ENCODE measurements at regions of chr5 and their contacts with region 1.

Region 1: GRCh38 chr5:140408750-140409256 is 7.2 kb downstream of the ANKHD1 start:
- DNase-seq: no peak
- H3K4me3 ChIP-seq: no peak overlapping the region
- H3K4me3 Mint-ChIP-seq: no peak overlapping the region
- H3K27ac ChIP-seq: no peak overlapping the region
- H3K27ac Mint-ChIP-seq: peak overlapping the region in 2 of 7 donors; percentile 37 to 40
- H3K4me1 ChIP-seq: peaks cover 3 to 8% of the 10 kb centered on the region in 2 donors
- H3K4me1 Mint-ChIP-seq: peaks cover 19% of the 10 kb centered on the region
- H3K27me3 ChIP-seq: no peaks in the 10 kb centered on the region
- H3K27me3 Mint-ChIP-seq: no peaks in the 10 kb centered on the region
- CTCF ChIP-seq: no peak

Region 2: GRCh38 chr5:140381972-140382371 is 26.8 kb before region 1 on chr5:
- intact Hi-C with region 1: loop called in 1 of 2 experiments (anchors 1 kb)
- DNase-seq: no peak
- H3K4me3 ChIP-seq: no peak overlapping the region
- H3K4me3 Mint-ChIP-seq: no peak overlapping the region
- H3K27ac ChIP-seq: no peak overlapping the region
- H3K27ac Mint-ChIP-seq: no peak overlapping the region
- H3K4me1 ChIP-seq: peaks cover 0 to 6% of the 10 kb centered on the region in 2 donors
- H3K4me1 Mint-ChIP-seq: peaks cover 5% of the 10 kb centered on the region
- H3K27me3 ChIP-seq: no peaks in the 10 kb centered on the region
- H3K27me3 Mint-ChIP-seq: no peaks in the 10 kb centered on the region
- CTCF ChIP-seq: no peak

Measured in CD14-positive monocyte (primary cell).